A673 (cell line): ENCODE measurements at regions of chr2 and their contacts with region 1.

Region 1: DNA sequence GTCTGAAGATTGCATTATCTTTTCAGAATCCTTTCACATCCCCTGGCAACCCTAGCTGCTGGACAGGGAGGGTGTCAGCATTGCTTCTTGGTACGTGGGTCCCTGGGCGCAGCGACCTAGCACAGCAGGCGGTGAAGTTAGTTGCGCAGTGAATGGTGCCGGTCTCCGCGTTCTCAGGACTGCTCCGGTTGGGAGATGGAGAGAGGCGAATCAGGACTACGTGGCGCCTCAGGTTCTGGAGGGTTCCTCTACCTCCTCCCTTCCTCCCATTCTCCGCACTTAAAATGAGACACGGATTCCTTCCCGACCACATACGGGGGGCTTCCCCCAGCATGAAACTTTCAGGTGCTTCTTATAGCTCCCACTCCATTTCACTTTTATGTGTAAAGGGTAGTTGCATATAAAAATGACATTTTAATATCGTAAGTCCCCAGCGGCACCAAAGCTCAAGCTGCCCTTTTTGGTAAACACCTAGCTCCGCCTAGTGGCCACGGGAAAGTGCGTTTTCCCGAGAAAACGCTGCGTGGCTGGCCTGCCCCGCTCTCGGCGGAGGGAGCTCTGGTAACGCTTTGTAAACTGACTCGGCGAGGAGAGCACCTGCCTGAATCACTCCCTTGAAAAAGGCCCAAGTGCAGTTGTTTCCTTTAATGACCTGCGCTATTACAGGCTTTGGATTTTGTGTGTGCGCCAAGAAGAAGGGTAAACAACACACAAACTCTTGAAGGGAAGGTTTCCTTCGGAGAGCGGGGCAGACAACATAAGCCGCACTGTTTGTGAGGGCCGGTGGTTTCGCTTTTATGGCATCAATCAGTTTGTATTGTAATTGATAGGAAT is 32.9 kb upstream of the INHBB start:
- DNase-seq: peak; percentile 85
- H3K4me3 ChIP-seq: peak overlapping the region; percentile 50
- H3K27ac ChIP-seq: no peak overlapping the region
- H3K4me1 ChIP-seq: no peaks in the 10 kb centered on the region
- H3K27me3 ChIP-seq: no peaks in the 10 kb centered on the region
- CTCF ChIP-seq: peak; percentile 94

Region 2: GRCh38 chr2:120109186-120110061 is 203.7 kb before region 1 on chr2:
- CTCF ChIA-PET with region 1: interaction called, 4 read pairs
- POLR2A ChIA-PET with region 1: no interaction called
- intact Hi-C with region 1: loop called (anchors 5 kb)
- DNase-seq: peak; percentile 57
- H3K4me3 ChIP-seq: no peak overlapping the region
- H3K27ac ChIP-seq: no peak overlapping the region
- H3K4me1 ChIP-seq: no peaks in the 10 kb centered on the region
- H3K27me3 ChIP-seq: no peaks in the 10 kb centered on the region
- CTCF ChIP-seq: peak; percentile 74

Region 3: DNA sequence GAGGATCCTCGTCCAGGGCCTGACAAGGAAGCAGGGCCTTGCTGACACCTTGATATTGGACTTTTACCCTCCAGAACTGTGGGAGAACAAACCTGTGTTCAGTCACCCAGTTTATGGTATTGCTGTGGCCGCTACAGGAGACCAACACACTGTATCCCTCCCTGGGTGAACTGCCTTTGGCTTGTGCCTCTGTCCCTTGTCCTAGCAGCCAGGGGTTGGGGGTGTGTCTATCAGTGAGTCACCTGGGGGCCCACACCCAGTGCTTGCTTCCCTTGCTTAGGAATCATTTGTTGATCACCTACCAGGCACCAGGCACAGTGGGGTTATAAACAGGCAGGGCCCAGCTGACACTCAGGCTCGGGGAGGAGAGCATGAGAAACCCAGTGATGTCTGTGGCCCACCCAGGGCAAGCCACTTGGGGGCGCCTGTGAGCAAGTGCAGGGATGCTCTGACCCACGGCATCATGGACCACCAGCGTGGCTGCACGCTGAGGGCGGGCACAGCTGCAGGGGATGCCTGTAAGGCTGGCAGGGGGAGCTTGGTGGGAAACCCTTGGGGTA is 107.0 kb before region 1 on chr2:
- CTCF ChIA-PET with region 1: no interaction called
- POLR2A ChIA-PET with region 1: no interaction called
- intact Hi-C with region 1: loop called (anchors 2 kb)
- DNase-seq: peak; percentile 42
- H3K4me3 ChIP-seq: no peak overlapping the region
- H3K27ac ChIP-seq: no peak overlapping the region
- H3K4me1 ChIP-seq: peaks cover 4% of the 10 kb centered on the region
- H3K27me3 ChIP-seq: no peaks in the 10 kb centered on the region
- CTCF ChIP-seq: peak; percentile 72

Region 4: GRCh38 chr2:120252225-120253021 is 60.7 kb before region 1 on chr2 and contains the start of gene RALB:
- CTCF ChIA-PET with region 1: no interaction called
- POLR2A ChIA-PET with region 1: no interaction called
- intact Hi-C with region 1: loop called (anchors 2 kb)
- DNase-seq: peak; percentile 99
- H3K4me3 ChIP-seq: peak within 1 kb of the TSS; percentile 78
- H3K27ac ChIP-seq: peak within 1 kb of the TSS; percentile 74
- H3K4me1 ChIP-seq: peaks cover 15% of the 10 kb centered on the region
- H3K27me3 ChIP-seq: no peaks in the 10 kb centered on the region
- CTCF ChIP-seq: no peak
- total RNA-seq, gene RALB: 47.0 and 52.1 TPM in 2 replicates